Astrocyte of the spinal cord (primary cell): ENCODE measurements at regions of chr10 and their contacts with region 1.

Region 1: GRCh38 chr10:100535715-100536353 is at the start of gene HIF1AN:
- DNase-seq: peak; percentile 96
- H3K4me3 ChIP-seq: peak within 1 kb of the TSS; percentile 91
- CTCF ChIP-seq: peak; percentile 99

Region 2: DNA sequence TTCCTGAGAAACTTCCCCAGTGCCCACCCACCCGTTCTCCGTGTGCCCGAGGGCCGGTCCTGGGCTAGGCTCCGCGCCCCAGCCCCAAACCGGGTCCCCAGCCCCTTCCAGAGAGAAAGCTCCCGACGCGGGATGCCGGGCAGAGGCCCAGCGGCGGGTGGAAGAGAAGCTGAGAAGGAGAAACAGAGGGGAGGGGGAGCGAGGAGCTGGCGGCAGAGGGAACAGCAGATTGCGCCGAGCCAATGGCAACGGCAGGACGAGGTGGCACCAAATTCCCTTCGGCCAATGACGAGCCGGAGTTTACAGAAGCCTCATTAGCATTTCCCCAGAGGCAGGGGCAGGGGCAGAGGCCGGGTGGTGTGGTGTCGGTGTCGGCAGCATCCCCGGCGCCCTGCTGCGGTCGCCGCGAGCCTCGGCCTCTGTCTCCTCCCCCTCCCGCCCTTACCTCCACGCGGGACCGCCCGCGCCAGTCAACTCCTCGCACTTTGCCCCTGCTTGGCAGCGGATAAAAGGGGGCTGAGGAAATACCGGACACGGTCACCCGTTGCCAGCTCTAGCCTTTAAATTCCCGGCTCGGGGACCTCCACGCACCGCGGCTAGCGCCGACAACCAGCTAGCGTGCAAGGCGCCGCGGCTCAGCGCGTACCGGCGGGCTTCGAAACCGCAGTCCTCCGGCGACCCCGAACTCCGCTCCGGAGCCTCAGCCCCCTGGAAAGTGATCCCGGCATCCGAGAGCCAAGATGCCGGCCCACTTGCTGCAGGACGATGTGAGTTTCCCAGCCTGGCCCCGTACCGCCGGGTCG is 188.9 kb before region 1 on chr10 and contains the start of gene SCD:
- in situ Hi-C with region 1: loop called (anchors 25 kb)
- DNase-seq: peak; percentile 95
- H3K4me3 ChIP-seq: peak within 1 kb of the TSS; percentile 93
- CTCF ChIP-seq: no peak